ENCODE measurements at regions of chr5 and their contacts with region 1.

Region 1: GRCh38 chr5:134958765-134959168 is 8.9 kb upstream of the CATSPER3 start:
- DNase-seq: no peak
- H3K4me3 ChIP-seq: no peak overlapping the region
- H3K27ac ChIP-seq: no peak overlapping the region
- H3K4me1 ChIP-seq: no peaks in the 10 kb centered on the region
- H3K27me3 ChIP-seq: no peaks in the 10 kb centered on the region
- CTCF ChIP-seq: no peak
- POLR2A ChIP-seq: no peak

Region 2: GRCh38 chr5:134975078-134975715 is 16.4 kb after region 1 on chr5:
- intact Hi-C with region 1: no loop called
- DNase-seq: no peak
- H3K4me3 ChIP-seq: no peak overlapping the region
- H3K27ac ChIP-seq: no peak overlapping the region
- H3K4me1 ChIP-seq: no peaks in the 10 kb centered on the region
- H3K27me3 ChIP-seq: no peaks in the 10 kb centered on the region
- CTCF ChIP-seq: no peak
- POLR2A ChIP-seq: no peak

Region 3: DNA sequence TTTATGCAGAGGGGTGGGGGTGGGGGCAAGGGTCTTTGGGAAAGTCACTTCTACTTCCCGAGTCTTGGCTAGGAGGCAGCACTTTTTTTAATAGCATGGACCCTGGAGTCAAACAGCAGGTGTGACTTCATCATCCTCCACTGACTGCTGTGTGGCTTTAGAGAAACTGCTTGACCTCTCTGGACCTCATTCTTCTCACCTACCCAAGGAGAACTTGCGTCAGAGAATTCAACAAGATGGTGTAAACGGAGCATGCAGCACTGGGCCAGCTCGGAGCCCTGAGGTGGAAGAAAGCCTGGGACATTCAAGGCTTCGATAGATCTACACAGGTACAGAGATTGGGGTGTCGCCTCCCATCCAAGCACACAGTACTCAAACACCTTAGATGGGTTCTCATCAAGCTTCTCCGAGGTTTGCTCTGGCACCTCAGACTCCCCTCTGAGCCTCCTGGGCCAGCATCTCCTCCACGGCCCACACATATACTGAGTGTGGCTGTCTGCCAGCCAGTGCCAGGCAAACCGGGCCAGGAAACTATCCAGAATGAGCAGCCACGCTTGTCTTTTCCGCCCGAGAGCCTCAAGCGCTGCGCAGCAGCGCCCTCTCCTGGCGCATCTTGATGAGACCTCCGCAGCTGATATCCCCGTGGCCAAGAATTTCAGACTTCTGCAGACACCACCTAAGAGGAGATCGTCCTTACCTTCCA is 871.1 kb after region 1 on chr5:
- intact Hi-C with region 1: loop called (anchors 5 kb)
- DNase-seq: peak; percentile 42 to 65
- H3K4me3 ChIP-seq: no peak overlapping the region
- H3K27ac ChIP-seq: no peak overlapping the region
- H3K4me1 ChIP-seq: no peaks in the 10 kb centered on the region
- H3K27me3 ChIP-seq: peaks cover 0 to 28% of the 10 kb centered on the region in 2 donors
- CTCF ChIP-seq: peak in 2 of 3 donors; percentile 36 to 52
- POLR2A ChIP-seq: no peak